ENCODE measurements at regions of chr9 and their contacts with region 1.

Region 1: DNA sequence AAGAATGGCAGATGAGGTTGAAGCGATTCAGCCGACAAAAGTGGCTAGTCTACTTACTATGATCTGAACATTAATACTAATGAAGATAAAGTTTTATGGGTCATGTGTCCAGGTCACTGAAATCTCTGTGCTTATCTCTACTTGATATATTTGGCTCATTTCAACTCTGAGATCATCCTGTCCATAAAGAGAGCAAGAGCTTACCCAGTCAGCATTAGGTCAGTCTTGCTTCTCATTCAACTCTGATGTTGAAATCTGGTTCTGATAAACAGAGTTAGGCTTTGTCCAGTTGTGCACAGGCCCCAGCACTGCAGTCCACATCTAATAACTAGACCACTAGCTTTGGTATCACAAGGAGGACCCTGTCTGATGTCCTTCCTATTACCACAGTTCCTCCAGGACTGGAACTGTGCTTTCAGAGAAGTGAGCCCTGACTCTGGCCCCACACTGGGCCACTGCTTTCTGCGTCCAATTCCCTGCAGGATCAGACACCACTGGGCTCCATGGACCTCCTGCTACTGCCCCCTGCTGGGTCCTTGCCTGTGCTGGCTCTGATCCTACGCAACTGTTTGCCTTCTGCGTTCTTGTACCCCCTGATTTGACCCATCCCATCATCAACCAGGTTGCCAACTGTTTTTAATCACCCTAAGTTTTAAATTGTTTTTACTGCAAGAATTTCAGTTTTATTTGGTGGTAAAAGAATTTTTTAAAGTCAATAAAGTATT is 23.7 kb upstream of the FAM120A start:
- DNase-seq: peak; percentile 13
- ATAC-seq: peak; percentile 88
- H3K4me3 ChIP-seq: no peak overlapping the region
- H3K27ac ChIP-seq: no peak overlapping the region
- H3K4me1 ChIP-seq: peaks cover 17% of the 10 kb centered on the region
- H3K27me3 ChIP-seq: no peaks in the 10 kb centered on the region; a peak in 1 of 5 replicates
- CTCF ChIP-seq: peak; percentile 79
- EP300 ChIP-seq: no peak
- POLR2A ChIP-seq: no peak
- RAD21 ChIP-seq: no peak

Region 2: GRCh38 chr9:93159601-93160471 is 268.0 kb before region 1 on chr9:
- CTCF ChIA-PET with region 1: interaction called, 4 read pairs
- POLR2A ChIA-PET with region 1: no interaction called
- in situ Hi-C with region 1: loop called (anchors 25 kb)
- intact Hi-C with region 1: loop called (anchors 10 kb)
- DNase-seq: peak; percentile 76
- ATAC-seq: peak; percentile 96
- H3K4me3 ChIP-seq: peak overlapping the region in 1 of 3 experiments; percentile 44; a peak in 1 of 6 replicates
- H3K27ac ChIP-seq: no peak overlapping the region
- H3K4me1 ChIP-seq: peaks cover 39% of the 10 kb centered on the region
- H3K27me3 ChIP-seq: peaks cover 0 to 11% of the 10 kb centered on the region in 2 experiments; a peak in 2 of 5 replicates
- CTCF ChIP-seq: peak; percentile 99
- EP300 ChIP-seq: no peak
- POLR2A ChIP-seq: no peak
- RAD21 ChIP-seq: peak; percentile 97

Region 3: GRCh38 chr9:93309889-93310425 is 117.9 kb before region 1 on chr9:
- CTCF ChIA-PET with region 1: no interaction called
- POLR2A ChIA-PET with region 1: no interaction called
- in situ Hi-C with region 1: no loop called
- intact Hi-C with region 1: loop called (anchors 5 kb)
- DNase-seq: no peak
- ATAC-seq: no peak
- H3K4me3 ChIP-seq: no peak overlapping the region
- H3K27ac ChIP-seq: no peak overlapping the region
- H3K4me1 ChIP-seq: peaks cover 40% of the 10 kb centered on the region
- H3K27me3 ChIP-seq: no peaks in the 10 kb centered on the region
- CTCF ChIP-seq: no peak
- EP300 ChIP-seq: no peak
- POLR2A ChIP-seq: no peak
- RAD21 ChIP-seq: no peak

Region 4: DNA sequence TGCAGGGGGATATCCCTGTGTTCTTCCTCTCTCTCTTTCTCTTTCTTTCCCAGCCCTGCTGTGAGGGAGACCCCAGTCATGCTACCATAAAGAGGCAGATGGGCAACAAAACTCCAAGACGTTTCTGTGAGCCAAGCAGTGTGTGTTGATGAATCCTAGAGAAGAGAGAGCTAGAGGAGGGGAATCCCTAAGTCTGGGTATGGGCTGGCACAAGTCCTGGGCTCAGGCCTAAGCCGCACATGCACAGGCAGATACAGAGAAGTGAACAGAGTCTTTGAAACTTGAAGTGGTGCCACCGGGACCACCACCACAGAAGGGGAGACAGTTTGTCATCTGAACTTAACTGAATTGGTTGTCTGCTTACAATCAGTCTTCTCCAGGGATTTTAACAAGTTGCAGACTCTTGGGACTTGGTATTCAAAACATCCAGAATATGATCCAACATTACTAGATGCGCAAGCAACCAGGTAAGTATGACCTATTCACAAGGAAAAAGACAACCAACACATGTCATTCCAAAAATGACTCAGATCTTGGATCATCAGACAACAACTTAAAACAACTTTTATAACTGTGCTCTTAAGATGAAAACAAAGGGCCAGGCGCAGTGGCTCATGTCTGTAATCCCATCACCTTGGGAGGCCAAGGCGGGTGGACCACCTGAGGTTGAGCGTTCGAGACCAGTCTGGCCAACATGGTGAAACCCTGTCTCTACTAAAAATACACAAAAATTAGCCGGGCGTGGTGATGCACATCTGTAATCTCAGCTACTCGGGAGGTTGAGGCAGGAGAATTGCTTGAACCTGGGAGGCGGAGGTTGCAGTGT is 13.3 kb after region 1 on chr9:
- CTCF ChIA-PET with region 1: no interaction called
- POLR2A ChIA-PET with region 1: no interaction called
- in situ Hi-C with region 1: no loop called
- intact Hi-C with region 1: loop called (anchors 1 kb)
- DNase-seq: no peak
- ATAC-seq: no peak; the same call in 2 of the 3 replicates
- H3K4me3 ChIP-seq: no peak overlapping the region
- H3K27ac ChIP-seq: no peak overlapping the region
- H3K4me1 ChIP-seq: no peaks in the 10 kb centered on the region
- H3K27me3 ChIP-seq: no peaks in the 10 kb centered on the region
- CTCF ChIP-seq: no peak
- EP300 ChIP-seq: no peak
- POLR2A ChIP-seq: no peak
- RAD21 ChIP-seq: no peak

Measured in HepG2 (cell line).